Heart right ventricle (tissue), 16 donors: ENCODE measurements at regions of chr14 and their contacts with region 1.

Region 1: DNA sequence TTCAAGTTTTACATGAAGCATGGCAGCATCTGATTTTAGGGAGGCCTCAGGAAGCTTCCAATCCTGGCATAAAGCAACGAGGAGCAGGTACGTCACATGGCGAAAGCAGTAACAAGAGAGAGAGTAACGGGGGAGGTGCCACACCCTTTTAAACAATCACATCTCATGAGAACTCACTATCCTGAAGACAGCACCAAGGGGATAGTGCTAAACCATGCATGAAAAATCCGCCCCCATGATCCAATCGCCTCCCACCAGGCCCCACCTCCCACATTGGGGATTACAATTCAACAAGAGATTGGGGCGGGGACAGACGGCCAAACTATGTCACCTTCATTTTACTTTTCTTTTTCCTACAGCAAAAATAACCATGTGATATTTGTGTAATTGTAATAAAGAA is 7.2 kb upstream of the MAP3K9 start:
- DNase-seq: no peak
- ATAC-seq: no peak
- H3K4me3 ChIP-seq: no peak overlapping the region
- H3K27ac ChIP-seq: no peak overlapping the region
- H3K4me1 ChIP-seq: peaks cover 0 to 20% (median 5%) of the 10 kb centered on the region in 9 donors
- H3K27me3 ChIP-seq: peaks cover 0 to 39% (median 5%) of the 10 kb centered on the region in 7 donors
- CTCF ChIP-seq: no peak

Region 2: DNA sequence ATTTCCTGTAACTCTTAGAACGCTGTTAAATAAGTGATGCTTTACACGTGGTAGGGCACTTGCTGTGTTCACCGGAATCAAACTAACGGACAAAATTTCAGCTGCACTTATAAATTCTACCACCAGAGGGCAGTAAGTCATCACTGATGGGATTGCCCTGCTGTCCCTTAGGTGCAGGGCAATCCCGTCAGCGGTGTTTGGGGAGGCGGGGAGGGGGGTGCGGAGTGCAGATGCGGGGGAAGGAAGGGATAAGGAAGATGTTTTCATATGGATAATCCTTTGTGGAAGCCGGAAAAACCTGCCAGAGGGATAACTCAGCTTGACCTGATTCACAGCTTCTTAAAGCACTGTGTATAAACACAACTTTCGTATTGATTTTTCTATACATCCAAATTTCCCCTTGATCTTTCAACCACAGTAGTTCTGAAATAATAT is 997.8 kb before region 1 on chr14:
- intact Hi-C with region 1: loop called in 2 of 10 experiments (anchors 5 to 10 kb)
- DNase-seq: peak in 1 of 2 donors; percentile 48
- ATAC-seq: peak in 7 of 8 donors; percentile 56 to 79 (median 62)
- H3K4me3 ChIP-seq: no peak overlapping the region
- H3K27ac ChIP-seq: no peak overlapping the region
- H3K4me1 ChIP-seq: peaks cover 0 to 4% (median 0%) of the 10 kb centered on the region in 9 donors
- H3K27me3 ChIP-seq: peaks cover 0 to 51% (median 38%) of the 10 kb centered on the region in 7 donors
- CTCF ChIP-seq: peak; percentile 74 to 87 (median 82)

Region 3: GRCh38 chr14:70622111-70622712 is 194.3 kb before region 1 on chr14:
- intact Hi-C with region 1: loop called in 8 of 10 experiments (anchors 5 to 10 kb)
- DNase-seq: peak in 1 of 2 donors; percentile 16
- ATAC-seq: peak in 4 of 8 donors; percentile 44 to 71 (median 62)
- H3K4me3 ChIP-seq: no peak overlapping the region
- H3K27ac ChIP-seq: no peak overlapping the region
- H3K4me1 ChIP-seq: peaks cover 0 to 9% (median 0%) of the 10 kb centered on the region in 9 donors
- H3K27me3 ChIP-seq: peaks cover 0 to 3% (median 0%) of the 10 kb centered on the region in 7 donors
- CTCF ChIP-seq: peak; percentile 23 to 73 (median 64)

Region 4: DNA sequence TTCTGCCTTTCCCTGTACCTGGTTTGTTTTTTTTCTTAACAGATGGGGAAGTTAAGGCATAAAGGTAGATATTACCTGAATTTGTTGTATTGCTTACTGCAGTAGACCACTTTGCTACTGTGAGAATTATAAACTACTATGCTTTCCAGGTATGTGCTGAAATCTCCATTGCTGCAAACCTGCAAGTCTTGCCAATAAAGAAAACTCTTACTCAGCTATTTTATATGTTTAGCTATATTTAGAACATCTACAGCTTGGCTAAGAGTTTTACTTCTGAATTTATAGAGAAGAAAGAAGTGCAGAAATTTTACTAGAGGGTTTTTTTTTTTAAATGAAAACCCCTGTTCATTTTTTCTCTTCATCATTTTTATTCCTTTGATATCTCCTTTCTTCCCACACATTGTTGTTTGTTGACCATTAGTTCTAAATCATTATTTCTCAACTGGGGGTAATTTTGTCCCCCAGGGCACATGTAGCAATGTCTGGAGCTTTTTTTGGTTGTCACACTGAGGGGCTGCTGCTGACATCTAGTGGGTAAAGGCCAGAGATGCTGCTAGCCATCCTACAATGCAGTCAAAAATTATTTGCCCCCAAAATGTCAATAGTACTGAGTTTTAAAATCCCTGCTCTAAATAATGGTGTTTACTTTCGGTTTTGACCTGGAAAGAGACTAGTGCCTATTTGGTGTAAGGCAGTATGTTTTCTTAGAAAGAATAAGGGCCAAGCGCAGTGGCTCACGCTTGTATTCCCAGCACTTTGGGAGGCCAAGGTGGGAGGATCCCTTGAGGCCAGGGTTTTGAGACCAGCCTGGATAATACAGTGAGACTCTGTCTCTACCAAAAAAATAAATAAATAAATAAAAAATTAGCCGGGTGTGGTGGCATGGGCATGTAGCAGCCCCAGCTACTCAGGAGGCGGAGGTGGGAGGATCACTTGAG is 139.3 kb after region 1 on chr14:
- intact Hi-C with region 1: loop called in 3 of 10 experiments (anchors 5 kb)
- DNase-seq: no peak
- ATAC-seq: peak in 6 of 8 donors; percentile 46 to 66 (median 62)
- H3K4me3 ChIP-seq: no peak overlapping the region
- H3K27ac ChIP-seq: no peak overlapping the region
- H3K4me1 ChIP-seq: peaks cover 0 to 52% (median 39%) of the 10 kb centered on the region in 9 donors
- H3K27me3 ChIP-seq: no peaks in the 10 kb centered on the region
- CTCF ChIP-seq: peak in 8 of 9 donors; percentile 19 to 72 (median 56)

Region 5: DNA sequence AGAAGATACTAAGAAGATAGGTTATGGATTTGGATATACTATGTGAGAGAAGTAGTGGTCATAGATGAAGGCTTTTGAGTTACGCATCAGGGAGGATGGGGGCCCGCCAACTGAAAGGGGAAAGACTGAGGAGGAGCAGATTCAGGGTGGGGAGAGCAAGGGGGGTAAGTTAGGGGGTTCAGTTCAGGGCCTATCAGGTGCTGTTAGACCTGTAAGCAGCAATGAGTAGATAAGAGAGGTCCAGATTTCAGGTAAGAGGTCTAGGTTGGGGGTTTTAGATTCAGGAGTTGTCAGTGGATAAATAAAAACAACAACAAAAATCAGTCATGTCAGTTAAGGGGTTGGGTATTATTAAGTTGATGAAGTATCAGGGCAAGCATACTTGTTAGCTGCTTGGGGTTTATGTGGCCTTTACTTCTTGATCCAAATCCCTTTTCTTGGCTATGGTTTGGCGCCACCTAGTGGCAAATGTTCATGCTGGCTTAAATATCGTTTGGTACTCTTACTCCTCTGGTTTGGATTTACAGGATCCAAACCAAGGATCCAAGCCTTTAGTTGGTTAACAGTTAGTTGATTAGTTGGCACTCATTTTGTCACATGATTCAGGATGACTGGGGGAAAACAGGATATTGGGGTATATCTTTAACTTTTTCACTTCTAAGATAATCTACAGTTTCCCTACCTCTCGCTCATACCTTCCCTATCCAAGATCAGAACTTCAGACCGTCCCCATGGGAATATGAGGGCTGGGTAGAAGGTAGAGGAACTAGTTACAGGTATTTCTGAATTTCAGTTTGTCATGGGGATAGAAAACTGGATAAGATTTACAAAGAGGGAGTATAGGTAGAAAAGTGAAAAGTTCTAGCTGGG is 155.8 kb after region 1 on chr14:
- intact Hi-C with region 1: loop called (anchors 1 to 5 kb)
- DNase-seq: peak; percentile 55 to 86
- ATAC-seq: peak; percentile 71 to 94 (median 88)
- H3K4me3 ChIP-seq: no peak overlapping the region
- H3K27ac ChIP-seq: peak overlapping the region in 1 of 10 donors; percentile 42
- H3K4me1 ChIP-seq: peaks cover 0 to 25% (median 10%) of the 10 kb centered on the region in 9 donors
- H3K27me3 ChIP-seq: no peaks in the 10 kb centered on the region
- CTCF ChIP-seq: peak; percentile 87 to 97 (median 94)